Right ventricle myocardium inferior (tissue), 1 donor: ENCODE measurements at regions of chr11 and their contacts with region 1.

Region 1: DNA sequence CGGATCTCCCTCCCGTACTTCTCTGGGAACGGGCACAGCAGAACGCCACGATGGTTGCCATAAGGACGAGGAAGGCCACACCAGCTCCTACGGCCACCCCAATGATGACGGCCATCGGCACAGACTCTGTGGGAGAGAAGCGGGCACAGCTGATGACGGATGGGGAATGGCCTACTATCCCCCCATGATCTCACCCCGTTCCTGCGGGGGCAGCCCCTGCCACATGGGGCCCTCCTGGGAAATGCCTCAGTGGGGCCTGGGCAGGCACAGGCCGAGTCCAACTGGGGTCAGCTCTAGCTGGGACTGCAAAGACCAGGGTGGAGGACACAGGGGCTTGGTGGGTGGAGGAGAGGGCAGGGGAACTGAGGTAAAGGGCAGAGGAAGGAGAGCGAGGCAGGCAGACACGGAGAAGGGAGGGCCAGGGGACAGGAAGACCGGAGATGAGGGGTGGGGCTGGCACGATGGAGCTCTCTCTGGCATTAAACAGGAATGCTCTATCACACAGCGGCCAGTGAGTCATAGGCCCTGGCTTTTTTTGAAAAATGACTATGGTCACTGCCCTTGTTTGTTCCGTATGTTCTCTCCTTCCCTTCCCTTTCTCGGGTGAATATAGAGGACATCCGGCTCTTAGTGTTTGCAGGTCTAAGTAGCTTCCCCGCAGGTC is 76.0 kb downstream of the ST3GAL4 start:
- DNase-seq: no peak
- ATAC-seq: peak; percentile 64

Region 2: DNA sequence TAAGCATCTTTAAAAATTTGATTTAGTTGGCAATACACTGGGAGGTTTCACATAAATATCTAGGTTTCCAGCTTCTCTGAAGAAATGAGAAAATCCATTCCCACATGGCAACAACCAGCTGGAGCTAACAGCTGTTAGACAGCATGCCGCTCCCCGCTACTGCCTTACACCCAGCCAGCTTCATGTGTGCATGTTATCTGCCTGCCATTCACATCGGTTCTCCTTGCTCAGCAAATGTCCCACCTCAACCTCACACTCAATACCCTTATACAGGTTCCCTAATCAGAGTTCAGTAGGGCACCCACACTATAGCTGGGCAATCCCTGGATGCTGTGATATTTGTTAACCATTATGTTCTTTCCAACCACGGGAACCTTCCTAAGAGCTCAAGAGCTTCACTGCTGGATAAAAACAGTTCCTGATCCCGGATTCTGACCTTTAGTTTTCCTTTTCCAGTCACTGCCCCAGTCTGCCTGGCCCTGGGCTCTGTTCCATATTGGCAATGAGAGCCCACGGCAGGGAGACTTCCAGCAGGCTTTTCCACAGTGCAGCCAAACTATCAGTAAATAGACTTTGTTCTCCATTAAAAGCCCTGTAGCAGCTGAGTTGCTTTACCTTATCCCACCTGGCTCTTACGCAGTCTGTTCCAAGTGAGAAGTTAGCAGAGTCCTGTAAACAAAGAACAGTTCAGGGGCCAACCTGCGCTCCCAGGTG is 228.7 kb before region 1 on chr11:
- intact Hi-C with region 1: loop called (anchors 10 kb)
- DNase-seq: no peak
- ATAC-seq: peak; percentile 67

Region 3: DNA sequence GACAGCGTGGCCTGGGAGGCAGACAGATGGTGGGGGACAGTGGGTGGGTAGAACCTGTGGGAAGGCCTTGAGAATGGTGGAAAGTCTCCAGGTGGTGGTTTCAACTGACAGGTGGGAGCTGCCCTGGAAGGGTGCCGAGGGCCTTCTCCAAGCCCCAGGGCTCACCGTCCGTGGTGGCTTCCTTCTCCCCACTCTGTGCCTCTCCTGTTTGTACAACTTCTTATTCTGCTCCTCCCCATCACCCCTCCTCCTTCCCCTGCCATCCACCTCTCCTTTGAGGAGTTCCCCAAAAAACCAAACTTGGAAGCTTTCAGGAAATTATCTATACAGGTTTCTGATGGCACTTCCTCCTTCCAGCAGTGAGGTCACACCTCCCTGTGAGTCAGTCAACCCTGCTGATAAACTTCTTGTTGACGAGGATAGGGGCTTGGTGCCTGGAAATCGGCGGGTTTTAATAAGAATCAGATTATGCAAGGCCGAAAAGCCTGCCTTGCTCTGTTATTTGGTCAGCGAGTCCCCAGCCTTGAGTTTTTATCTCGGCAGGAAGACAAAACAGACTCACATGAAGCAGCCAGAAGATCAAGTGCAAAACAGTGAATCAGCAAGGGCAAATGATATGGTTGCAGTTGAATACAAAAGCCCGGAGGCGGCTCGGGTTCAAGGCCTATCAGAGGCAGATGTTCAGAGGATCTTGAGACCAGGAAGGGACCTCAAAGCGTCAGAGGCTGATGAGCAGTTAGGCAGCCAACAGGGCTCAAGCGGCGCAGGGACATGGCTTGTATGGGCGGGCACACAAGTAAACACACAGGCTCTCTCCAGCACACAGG is 85.6 kb before region 1 on chr11:
- intact Hi-C with region 1: loop called (anchors 5 kb)
- DNase-seq: peak; percentile 83
- ATAC-seq: peak; percentile 69

Region 4: GRCh38 chr11:126615845-126616244 is 184.3 kb after region 1 on chr11:
- intact Hi-C with region 1: no loop called
- DNase-seq: no peak
- ATAC-seq: no peak